Spleen (tissue), 13 donors: ENCODE measurements at regions of chr11 and their contacts with region 1.

Region 1: GRCh38 chr11:26767060-26767459 is 45.2 kb upstream of the SLC5A12 start:
- DNase-seq: no peak
- H3K4me3 ChIP-seq: no peak overlapping the region
- H3K27ac ChIP-seq: no peak overlapping the region
- H3K4me1 ChIP-seq: no peaks in the 10 kb centered on the region
- H3K27me3 ChIP-seq: no peaks in the 10 kb centered on the region
- CTCF ChIP-seq: no peak
- POLR2A ChIP-seq: no peak

Region 2: DNA sequence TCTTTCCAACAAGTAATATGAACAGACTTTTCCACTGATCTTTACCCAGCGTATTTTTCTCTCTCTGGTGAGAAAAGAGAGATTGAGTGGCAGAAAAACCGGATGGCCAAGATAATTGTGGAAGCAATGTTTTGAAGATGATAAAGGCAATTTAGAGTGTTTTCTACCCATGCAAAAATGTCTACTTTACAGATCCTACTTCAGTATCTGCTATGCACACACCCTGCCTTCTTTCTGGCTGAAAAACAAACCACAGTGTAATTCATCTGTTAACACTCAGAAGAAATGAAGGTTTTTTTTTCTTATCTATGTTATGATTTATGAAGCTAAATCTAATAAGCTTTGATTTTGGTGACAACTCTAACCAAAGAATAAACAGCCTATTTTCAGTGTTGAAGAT is 102.0 kb before region 1 on chr11:
- intact Hi-C with region 1: no loop called
- DNase-seq: no peak
- H3K4me3 ChIP-seq: no peak overlapping the region
- H3K27ac ChIP-seq: no peak overlapping the region
- H3K4me1 ChIP-seq: no peaks in the 10 kb centered on the region
- H3K27me3 ChIP-seq: no peaks in the 10 kb centered on the region
- CTCF ChIP-seq: no peak
- POLR2A ChIP-seq: no peak

Region 3: DNA sequence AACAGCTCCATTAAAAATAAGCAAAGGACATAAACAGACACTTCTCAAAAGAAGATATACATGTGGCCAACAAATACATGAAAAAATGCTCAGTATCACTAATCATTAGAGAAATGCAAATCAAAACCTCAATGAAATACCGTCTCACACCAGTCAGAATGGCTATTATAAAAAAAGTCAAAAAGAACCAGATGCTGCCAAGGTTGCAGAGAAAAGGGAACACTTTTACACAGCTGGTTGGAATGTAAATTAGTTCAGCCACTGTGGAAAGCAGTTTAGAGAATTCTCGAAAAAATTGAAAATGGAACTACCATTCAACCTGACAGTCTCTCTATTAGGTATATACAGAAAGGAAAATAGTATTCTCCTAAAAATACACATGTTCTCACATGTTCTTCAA is 124.4 kb after region 1 on chr11:
- intact Hi-C with region 1: loop called (anchors 5 kb)
- DNase-seq: no peak
- H3K4me3 ChIP-seq: no peak overlapping the region
- H3K27ac ChIP-seq: no peak overlapping the region
- H3K4me1 ChIP-seq: peaks cover 0 to under 1% (median 0%) of the 10 kb centered on the region in 6 donors
- H3K27me3 ChIP-seq: no peaks in the 10 kb centered on the region
- CTCF ChIP-seq: no peak
- POLR2A ChIP-seq: no peak

Region 4: GRCh38 chr11:27088353-27088752 is 321.3 kb after region 1 on chr11:
- intact Hi-C with region 1: no loop called
- DNase-seq: no peak
- H3K4me3 ChIP-seq: no peak overlapping the region
- H3K27ac ChIP-seq: no peak overlapping the region
- H3K4me1 ChIP-seq: peaks cover 0 to 4% (median 0%) of the 10 kb centered on the region in 6 donors
- H3K27me3 ChIP-seq: no peaks in the 10 kb centered on the region
- CTCF ChIP-seq: no peak
- POLR2A ChIP-seq: no peak